Activated CD4-positive, alpha-beta T cell treated with anti-CD3 and anti-CD28 coated beads, Interleukin-2, amount 10 ng/mL, durations not matched to agents 24 days and 14 days (primary cell): ENCODE measurements at regions of chr7 and their contacts with region 1.

Region 1: DNA sequence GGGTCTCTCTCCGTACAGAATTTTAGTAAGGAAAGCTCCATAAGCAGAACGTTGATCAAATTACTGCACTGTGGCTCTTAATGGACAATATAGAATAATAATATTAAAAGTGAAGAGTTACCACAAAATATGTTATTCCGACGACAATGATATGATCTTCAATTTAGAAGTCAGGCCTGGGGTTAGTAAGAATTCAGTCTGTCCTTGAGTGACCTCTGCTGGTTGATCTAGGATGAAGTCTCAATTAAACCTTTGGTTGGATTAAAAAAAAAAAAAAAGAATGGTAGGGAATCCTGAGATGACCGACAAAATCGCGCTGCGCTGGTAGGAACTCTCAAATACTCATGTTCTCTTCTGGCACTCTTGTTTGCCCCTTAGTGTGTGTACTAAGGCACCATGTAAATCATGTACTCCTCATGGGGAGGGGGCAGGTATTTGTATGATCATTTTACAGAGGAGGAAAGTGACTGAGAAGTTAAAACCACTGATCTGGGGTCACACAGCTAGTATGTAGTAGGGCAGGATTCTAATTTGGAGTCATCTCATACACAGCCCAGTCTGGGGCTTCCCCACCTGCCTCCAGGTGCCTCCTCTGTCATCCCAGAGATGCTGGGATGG is 161.3 kb upstream of the NPVF start:
- DNase-seq: peak; percentile 69
- H3K4me3 Mint-ChIP-seq: no peak overlapping the region
- H3K27ac Mint-ChIP-seq: no peak overlapping the region
- H3K4me1 Mint-ChIP-seq: no peaks in the 10 kb centered on the region
- H3K27me3 Mint-ChIP-seq: peaks cover 12% of the 10 kb centered on the region

Region 2: DNA sequence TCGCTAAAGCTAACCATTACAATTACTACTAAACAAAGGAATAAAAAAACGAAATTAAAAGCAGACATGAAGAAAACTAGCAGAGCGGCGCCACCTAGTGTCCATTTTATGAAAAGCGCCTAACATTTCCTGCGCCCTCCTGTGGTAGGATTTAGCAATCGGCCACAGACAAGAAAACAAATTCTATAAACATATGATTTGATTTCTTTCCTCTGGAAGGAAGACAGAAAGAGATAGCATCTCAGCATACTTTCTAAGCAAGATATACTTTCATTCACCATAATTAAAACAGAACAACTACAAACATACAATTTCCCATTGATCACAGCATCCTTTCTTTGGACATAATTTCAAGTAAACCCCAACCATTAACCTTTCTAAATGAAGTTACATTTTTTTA is 176.4 kb after region 1 on chr7:
- intact Hi-C with region 1: loop called (anchors 1 kb)
- DNase-seq: peak; percentile 90
- H3K4me3 Mint-ChIP-seq: peak overlapping the region; percentile 53
- H3K27ac Mint-ChIP-seq: no peak overlapping the region
- H3K4me1 Mint-ChIP-seq: peaks cover 6% of the 10 kb centered on the region
- H3K27me3 Mint-ChIP-seq: peaks cover 2% of the 10 kb centered on the region